PC-9 (cell line): ENCODE measurements at regions of chr1 and their contacts with region 1.

Region 1: DNA sequence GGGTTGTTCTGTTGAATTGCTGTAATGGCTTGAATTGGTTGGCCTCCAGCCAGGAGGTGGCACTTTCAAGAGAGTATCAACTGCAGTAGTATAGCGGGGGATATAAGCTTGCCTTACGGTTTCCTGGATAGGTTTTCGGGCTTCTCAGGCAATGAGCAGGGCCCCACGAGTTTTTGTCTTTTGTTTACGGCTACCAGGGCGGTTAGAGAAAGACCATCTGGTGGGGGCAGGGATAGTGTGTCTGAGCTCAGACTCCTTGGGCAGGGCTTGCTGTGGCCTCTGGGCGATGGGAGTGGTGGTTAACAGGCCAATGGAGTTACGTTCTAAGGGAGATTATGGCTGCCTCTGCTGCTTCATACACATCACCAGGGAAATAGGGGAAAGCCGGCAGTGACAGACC is 62.8 kb downstream of the DTL start:
- DNase-seq: no peak
- H3K4me3 ChIP-seq: no peak overlapping the region
- H3K27ac ChIP-seq: no peak overlapping the region
- H3K4me1 ChIP-seq: no peaks in the 10 kb centered on the region
- H3K27me3 ChIP-seq: no peaks in the 10 kb centered on the region
- CTCF ChIP-seq: no peak

Region 2: GRCh38 chr1:210989905-210990304 is 1108.4 kb before region 1 on chr1:
- CTCF ChIA-PET with region 1: no interaction called
- POLR2A ChIA-PET with region 1: no interaction called
- intact Hi-C with region 1: no loop called
- DNase-seq: no peak
- H3K4me3 ChIP-seq: no peak overlapping the region
- H3K27ac ChIP-seq: no peak overlapping the region
- H3K4me1 ChIP-seq: no peaks in the 10 kb centered on the region
- H3K27me3 ChIP-seq: no peaks in the 10 kb centered on the region
- CTCF ChIP-seq: no peak

Region 3: DNA sequence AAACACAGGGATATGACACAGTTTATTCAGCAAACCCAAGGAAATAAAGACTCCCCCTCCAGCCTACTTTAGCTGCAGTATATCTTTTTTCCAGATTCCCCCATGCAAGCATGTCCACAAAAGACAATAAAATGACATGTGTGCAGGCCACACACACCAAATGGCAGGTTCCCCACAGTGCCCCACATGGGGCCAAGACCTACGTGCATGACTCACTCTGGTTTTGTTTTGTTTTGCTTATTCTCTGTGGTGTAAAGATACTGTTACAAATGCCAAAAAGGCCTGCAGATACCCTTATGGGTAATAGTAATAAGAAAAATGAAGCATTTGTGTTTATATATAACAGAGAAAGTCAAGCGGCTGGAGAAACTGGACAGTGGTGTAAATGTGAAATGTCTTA is 677.9 kb before region 1 on chr1:
- CTCF ChIA-PET with region 1: no interaction called
- POLR2A ChIA-PET with region 1: no interaction called
- intact Hi-C with region 1: no loop called
- DNase-seq: no peak
- H3K4me3 ChIP-seq: no peak overlapping the region
- H3K27ac ChIP-seq: no peak overlapping the region
- H3K4me1 ChIP-seq: no peaks in the 10 kb centered on the region
- H3K27me3 ChIP-seq: no peaks in the 10 kb centered on the region
- CTCF ChIP-seq: no peak

Region 4: GRCh38 chr1:212147581-212148033 is 49.3 kb after region 1 on chr1:
- CTCF ChIA-PET with region 1: no interaction called
- POLR2A ChIA-PET with region 1: interaction called, 17 read pairs
- intact Hi-C with region 1: no loop called
- DNase-seq: no peak
- H3K4me3 ChIP-seq: no peak overlapping the region
- H3K27ac ChIP-seq: no peak overlapping the region
- H3K4me1 ChIP-seq: no peaks in the 10 kb centered on the region
- H3K27me3 ChIP-seq: no peaks in the 10 kb centered on the region
- CTCF ChIP-seq: no peak

Region 5: GRCh38 chr1:212234431-212235395 is 136.4 kb after region 1 on chr1:
- CTCF ChIA-PET with region 1: no interaction called
- POLR2A ChIA-PET with region 1: interaction called, 26 read pairs
- intact Hi-C with region 1: no loop called
- DNase-seq: peak; percentile 53 to 80
- H3K4me3 ChIP-seq: no peak overlapping the region
- H3K27ac ChIP-seq: peak overlapping the region; percentile 69
- H3K4me1 ChIP-seq: peaks cover 32% of the 10 kb centered on the region
- H3K27me3 ChIP-seq: no peaks in the 10 kb centered on the region
- CTCF ChIP-seq: no peak